Activated T-helper 1 cell treated with anti-CD3 and anti-CD28 coated beads, Interleukin-12 subunit alpha, Interleukin-12 subunit beta, Interleukin-2, Interleukin-4 antibody, amounts not matched to agents 30 ng/mL and 10 ng/mL and 1 ng/mL, durations not matched to agents 14 hours and 24 hours and 36 hours (primary cell): ENCODE measurements at regions of chr22 and their contacts with region 1.

Region 1: GRCh38 chr22:21938071-21938822 is 14.4 kb downstream of the PPM1F start:
- DNase-seq: peak; percentile 87
- H3K4me3 Mint-ChIP-seq: peak overlapping the region; percentile 75
- H3K27ac Mint-ChIP-seq: peak overlapping the region; percentile 67
- H3K4me1 Mint-ChIP-seq: peaks cover 44% of the 10 kb centered on the region
- H3K27me3 Mint-ChIP-seq: peaks cover 1% of the 10 kb centered on the region

Region 2: DNA sequence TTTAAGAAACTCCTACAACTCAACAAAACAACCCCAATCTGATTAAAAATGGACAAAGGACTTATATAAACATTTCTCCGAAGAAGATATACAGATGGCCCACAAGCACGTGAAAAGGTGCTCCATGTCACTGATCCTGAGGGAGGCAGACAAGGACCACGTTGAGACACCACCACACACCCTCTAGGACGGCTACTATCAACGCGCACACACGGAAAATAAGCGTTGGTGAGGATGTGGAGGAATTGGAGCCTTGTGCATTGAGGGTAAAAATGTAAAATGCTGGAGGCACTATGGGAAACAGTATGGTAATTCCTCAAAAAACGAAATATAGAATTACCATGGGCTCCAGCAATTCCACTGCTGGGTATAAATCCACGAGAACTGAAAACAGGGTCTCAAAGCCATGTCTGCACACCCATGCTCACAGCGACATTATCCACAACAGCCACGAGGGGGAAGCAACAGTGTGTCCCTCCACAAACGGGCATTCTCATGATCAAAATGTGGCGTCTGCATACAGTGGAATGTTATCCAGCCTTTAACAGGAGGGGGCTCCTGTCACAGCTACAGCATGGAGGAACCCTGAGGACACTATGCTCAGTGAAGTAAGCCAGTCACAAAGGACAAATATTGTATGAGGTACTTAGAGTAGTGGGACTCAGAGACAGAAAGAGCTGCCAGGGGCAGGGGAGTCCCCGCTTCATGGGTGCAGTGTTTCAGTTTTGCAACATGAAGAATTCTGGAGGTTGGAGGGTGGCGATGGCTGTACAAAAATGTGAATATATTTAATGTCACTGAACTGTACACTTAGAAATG is 225.1 kb before region 1 on chr22:
- intact Hi-C with region 1: loop called (anchors 1 kb)
- DNase-seq: peak; percentile 36
- H3K4me3 Mint-ChIP-seq: no peak overlapping the region
- H3K27ac Mint-ChIP-seq: no peak overlapping the region
- H3K4me1 Mint-ChIP-seq: peaks cover 7% of the 10 kb centered on the region
- H3K27me3 Mint-ChIP-seq: peaks cover 9% of the 10 kb centered on the region

Region 3: GRCh38 chr22:21816787-21817496 is 121.3 kb before region 1 on chr22:
- intact Hi-C with region 1: loop called (anchors 5 kb)
- DNase-seq: peak; percentile 42
- H3K4me3 Mint-ChIP-seq: peak overlapping the region; percentile 65
- H3K27ac Mint-ChIP-seq: peak overlapping the region; percentile 96
- H3K4me1 Mint-ChIP-seq: peaks cover 47% of the 10 kb centered on the region
- H3K27me3 Mint-ChIP-seq: no peaks in the 10 kb centered on the region

Region 4: GRCh38 chr22:21982338-21982965 is 44.2 kb after region 1 on chr22 and contains the start of gene TOP3B:
- intact Hi-C with region 1: loop called (anchors 5 kb)
- DNase-seq: peak; percentile 79
- H3K4me3 Mint-ChIP-seq: peak within 1 kb of the TSS; percentile 89
- H3K27ac Mint-ChIP-seq: peak within 1 kb of the TSS; percentile 52
- H3K4me1 Mint-ChIP-seq: peaks cover 15% of the 10 kb centered on the region
- H3K27me3 Mint-ChIP-seq: no peaks in the 10 kb centered on the region
- total RNA-seq, gene TOP3B: 48.4 and 51.9 TPM in 2 replicates